ENCODE measurements at regions of chr17 and their contacts with region 1.

Region 1: GRCh38 chr17:47649153-47649971 is at the start of gene KPNB1:
- DNase-seq: peak; percentile 99
- ATAC-seq: peak; percentile 86
- H3K4me3 Mint-ChIP-seq: peak within 1 kb of the TSS; percentile 98
- H3K27ac Mint-ChIP-seq: peak within 1 kb of the TSS; percentile 96
- H3K4me1 Mint-ChIP-seq: peaks cover 52% of the 10 kb centered on the region
- H3K27me3 Mint-ChIP-seq: no peaks in the 10 kb centered on the region
- total RNA-seq, gene KPNB1: 640 to 656 TPM

Region 2: GRCh38 chr17:46193626-46194392 is 1455.6 kb before region 1 on chr17:
- CTCF ChIA-PET with region 1: no interaction called
- POLR2A ChIA-PET with region 1: no interaction called
- intact Hi-C with region 1: loop called in 1 of 2 experiments (anchors 5 kb)
- DNase-seq: peak; percentile 96
- ATAC-seq: peak; percentile 83
- H3K4me3 Mint-ChIP-seq: peak overlapping the region; percentile 74
- H3K27ac Mint-ChIP-seq: peak overlapping the region; percentile 94
- H3K4me1 Mint-ChIP-seq: peaks cover 56% of the 10 kb centered on the region
- H3K27me3 Mint-ChIP-seq: no peaks in the 10 kb centered on the region

Region 3: DNA sequence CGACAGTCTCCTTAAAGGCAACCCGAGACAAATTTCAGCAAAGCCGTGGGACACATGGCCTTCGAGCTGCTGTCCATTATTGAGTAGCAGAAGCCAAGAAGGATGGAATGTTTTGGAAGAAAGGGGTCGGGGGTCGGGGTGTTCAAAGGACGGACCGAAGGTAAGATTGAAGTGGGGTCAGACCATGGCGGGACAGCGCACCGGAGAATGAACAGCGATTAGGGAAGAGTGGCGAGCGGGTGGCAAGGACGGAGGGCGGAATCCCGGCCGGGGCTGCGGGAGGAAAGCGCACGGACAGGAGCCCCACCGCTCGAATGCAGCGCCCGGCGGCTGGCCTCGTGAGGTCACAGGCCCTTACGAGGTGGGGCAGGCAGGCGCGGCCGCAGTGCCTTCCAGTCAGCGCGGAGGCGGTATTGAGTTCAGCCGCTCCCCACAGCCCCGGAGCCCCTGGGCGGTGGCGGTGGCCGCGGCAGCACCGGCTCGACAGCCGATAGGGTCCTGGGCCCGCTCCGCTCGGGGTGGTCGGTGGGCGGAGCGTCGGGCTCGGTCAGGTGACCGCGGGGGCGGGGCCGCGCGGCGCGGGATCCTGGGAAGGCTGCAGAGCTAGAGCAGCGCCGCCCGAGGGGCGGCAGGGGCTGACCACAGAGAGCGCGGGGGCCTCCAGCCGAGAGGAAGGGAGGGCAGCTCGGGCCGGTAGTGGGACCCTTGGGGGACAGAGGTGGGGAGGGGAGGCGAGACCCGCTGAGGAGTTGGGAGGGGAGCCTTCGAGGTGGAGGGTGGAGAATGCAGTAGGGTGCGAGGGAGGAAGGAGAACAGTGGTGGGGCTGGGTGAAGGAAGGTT is 325.8 kb before region 1 on chr17 and contains the start of gene EFCAB13:
- CTCF ChIA-PET with region 1: no interaction called
- POLR2A ChIA-PET with region 1: no interaction called
- intact Hi-C with region 1: loop called in 1 of 2 experiments (anchors 1 kb)
- DNase-seq: peak; percentile 86
- ATAC-seq: peak; percentile 84
- H3K4me3 Mint-ChIP-seq: peak within 1 kb of the TSS; percentile 85
- H3K27ac Mint-ChIP-seq: peak within 1 kb of the TSS; percentile 91
- H3K4me1 Mint-ChIP-seq: peaks cover 18% of the 10 kb centered on the region
- H3K27me3 Mint-ChIP-seq: peaks cover 10% of the 10 kb centered on the region
- total RNA-seq, gene EFCAB13: 4.6 to 5.9 TPM

Region 4: DNA sequence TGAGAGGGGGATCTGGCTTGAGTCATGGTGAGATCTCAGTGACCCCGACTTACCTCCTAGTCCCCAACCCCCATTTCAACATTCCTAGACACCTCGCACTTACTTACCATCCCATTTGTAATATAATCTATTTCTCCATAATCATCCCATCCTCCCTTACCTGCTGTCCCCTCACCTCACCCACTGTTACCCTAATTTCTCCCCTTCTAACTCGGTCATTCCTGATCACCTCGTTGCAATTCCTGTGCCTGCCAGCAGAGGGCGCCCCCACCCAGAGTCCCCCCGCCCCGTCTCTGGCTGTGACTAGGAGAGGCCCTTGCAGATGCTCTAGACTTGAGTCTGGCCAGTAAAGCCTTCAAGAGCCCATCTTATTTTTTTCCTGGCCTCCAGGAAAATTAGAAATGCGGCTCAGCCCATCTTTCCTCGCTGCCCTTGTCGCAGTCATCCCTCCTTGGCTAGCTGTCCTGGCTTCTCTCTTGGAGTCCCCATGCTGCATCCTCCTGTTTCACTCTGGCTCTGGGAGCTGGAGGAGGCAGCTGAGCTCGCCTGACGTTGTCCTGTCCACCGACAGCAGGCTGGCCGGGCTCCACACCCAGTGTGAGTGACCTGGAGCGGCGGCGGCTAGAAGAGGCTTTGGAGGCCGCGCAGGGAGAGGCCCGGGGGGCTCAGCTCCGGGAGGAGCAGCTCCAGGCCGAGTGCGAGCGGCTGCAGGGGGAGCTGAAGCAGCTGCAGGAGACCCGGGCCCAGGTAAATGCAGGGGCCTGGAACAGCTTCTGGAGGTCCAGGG is 49.6 kb after region 1 on chr17:
- CTCF ChIA-PET with region 1: interaction called, 8 read pairs
- POLR2A ChIA-PET with region 1: interaction called, 3 read pairs
- intact Hi-C with region 1: loop called in 1 of 2 experiments (anchors 1 kb)
- DNase-seq: peak; percentile 91
- ATAC-seq: peak; percentile 37
- H3K4me3 Mint-ChIP-seq: no peak overlapping the region
- H3K27ac Mint-ChIP-seq: peak overlapping the region; percentile 35
- H3K4me1 Mint-ChIP-seq: peaks cover 78% of the 10 kb centered on the region
- H3K27me3 Mint-ChIP-seq: no peaks in the 10 kb centered on the region

Region 5: DNA sequence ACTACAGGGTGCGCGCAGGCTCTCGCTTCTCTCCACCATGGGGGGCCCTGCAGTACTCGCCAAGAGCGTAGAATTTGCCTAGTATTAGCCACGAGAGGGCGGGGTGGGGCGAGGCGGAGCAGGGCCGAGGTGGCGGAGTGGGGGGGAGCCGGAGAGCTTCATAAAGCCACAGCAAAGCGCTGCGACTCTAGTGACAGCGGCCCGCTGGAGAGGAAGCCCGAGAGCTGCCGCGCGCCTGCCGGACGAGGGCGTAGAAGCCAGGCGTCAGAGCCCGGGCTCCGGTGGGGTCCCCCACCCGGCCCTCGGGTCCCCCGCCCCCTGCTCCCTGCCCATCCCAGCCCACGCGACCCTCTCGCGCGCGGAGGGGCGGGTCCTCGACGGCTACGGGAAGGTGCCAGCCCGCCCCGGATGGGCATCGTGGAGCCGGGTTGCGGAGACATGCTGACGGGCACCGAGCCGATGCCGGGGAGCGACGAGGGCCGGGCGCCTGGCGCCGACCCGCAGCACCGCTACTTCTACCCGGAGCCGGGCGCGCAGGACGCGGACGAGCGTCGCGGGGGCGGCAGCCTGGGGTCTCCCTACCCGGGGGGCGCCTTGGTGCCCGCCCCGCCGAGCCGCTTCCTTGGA is 83.8 kb after region 1 on chr17 and contains the start of gene TBX21:
- CTCF ChIA-PET with region 1: interaction called, 3 read pairs
- POLR2A ChIA-PET with region 1: interaction called, 6 read pairs
- intact Hi-C with region 1: loop called in 1 of 2 experiments (anchors 2 kb)
- DNase-seq: peak; percentile 96
- ATAC-seq: peak; percentile 80
- H3K4me3 Mint-ChIP-seq: peak within 1 kb of the TSS; percentile 93
- H3K27ac Mint-ChIP-seq: peak within 1 kb of the TSS; percentile 98
- H3K4me1 Mint-ChIP-seq: peaks cover 63% of the 10 kb centered on the region
- H3K27me3 Mint-ChIP-seq: no peaks in the 10 kb centered on the region
- total RNA-seq, gene TBX21: 73.4 to 76.8 TPM

Region 6: DNA sequence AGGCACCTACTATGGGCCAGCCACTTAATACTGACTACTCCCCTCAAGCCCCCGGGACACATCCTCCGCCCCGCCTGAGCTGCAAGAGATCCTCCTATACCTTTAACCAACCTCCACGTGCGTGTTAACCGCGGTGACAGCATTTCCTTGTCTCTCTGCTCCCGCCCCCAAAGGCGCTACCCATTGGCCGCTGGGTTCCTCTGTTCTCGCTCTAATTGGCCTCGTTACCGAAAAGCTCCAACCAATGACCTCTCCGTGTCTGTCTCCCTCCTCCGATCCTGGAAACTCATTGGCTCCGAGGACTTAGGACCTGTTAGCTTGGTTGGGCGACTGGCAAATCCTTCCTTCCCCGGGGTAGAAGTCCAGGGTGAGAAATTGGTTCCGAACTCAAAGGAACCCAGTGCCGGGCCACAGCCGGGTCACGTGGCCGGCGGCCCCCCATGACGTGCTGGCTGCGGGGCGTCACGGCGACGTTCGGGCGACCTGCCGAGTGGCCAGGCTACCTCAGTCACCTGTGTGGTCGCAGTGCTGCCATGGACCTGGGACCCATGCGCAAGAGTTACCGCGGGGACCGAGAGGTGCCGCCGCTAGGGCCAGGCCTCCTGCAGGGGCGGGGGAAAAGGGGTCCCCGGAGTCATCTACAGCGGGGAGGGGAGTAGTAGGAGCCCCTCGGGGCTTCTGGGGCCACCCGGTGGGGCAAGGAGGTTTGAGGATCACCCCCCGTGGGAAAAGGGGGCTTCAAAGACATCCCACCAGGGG is 292.1 kb after region 1 on chr17 and contains the start of gene PNPO:
- CTCF ChIA-PET with region 1: interaction called, 3 read pairs
- POLR2A ChIA-PET with region 1: no interaction called
- intact Hi-C with region 1: loop called in 1 of 2 experiments (anchors 2 kb)
- DNase-seq: peak; percentile 98
- ATAC-seq: peak; percentile 99
- H3K4me3 Mint-ChIP-seq: peak within 1 kb of the TSS; percentile 95
- H3K27ac Mint-ChIP-seq: peak within 1 kb of the TSS; percentile 91
- H3K4me1 Mint-ChIP-seq: peaks cover 64% of the 10 kb centered on the region
- H3K27me3 Mint-ChIP-seq: no peaks in the 10 kb centered on the region
- total RNA-seq, gene PNPO: 29.7 to 41.0 TPM

Region 7: GRCh38 chr17:48107168-48108132 is 458.1 kb after region 1 on chr17 and contains the start of gene SNX11:
- CTCF ChIA-PET with region 1: no interaction called
- POLR2A ChIA-PET with region 1: no interaction called
- intact Hi-C with region 1: loop called in 1 of 2 experiments (anchors 5 kb)
- DNase-seq: peak; percentile 97
- ATAC-seq: peak; percentile 87
- H3K4me3 Mint-ChIP-seq: peak within 1 kb of the TSS; percentile 97
- H3K27ac Mint-ChIP-seq: peak within 1 kb of the TSS; percentile 98
- H3K4me1 Mint-ChIP-seq: peaks cover 61% of the 10 kb centered on the region
- H3K27me3 Mint-ChIP-seq: no peaks in the 10 kb centered on the region
- total RNA-seq, gene SNX11: 18.0 to 21.4 TPM